ENCODE measurements at regions of chr3 and their contacts with region 1.

Region 1: GRCh38 chr3:195403852-195404408 is 38.9 kb downstream of the ACAP2 start:
- DNase-seq: no peak
- H3K4me3 Mint-ChIP-seq: no peak overlapping the region
- H3K27ac Mint-ChIP-seq: no peak overlapping the region
- H3K4me1 Mint-ChIP-seq: peaks cover 38% of the 10 kb centered on the region
- H3K27me3 Mint-ChIP-seq: no peaks in the 10 kb centered on the region

Region 2: DNA sequence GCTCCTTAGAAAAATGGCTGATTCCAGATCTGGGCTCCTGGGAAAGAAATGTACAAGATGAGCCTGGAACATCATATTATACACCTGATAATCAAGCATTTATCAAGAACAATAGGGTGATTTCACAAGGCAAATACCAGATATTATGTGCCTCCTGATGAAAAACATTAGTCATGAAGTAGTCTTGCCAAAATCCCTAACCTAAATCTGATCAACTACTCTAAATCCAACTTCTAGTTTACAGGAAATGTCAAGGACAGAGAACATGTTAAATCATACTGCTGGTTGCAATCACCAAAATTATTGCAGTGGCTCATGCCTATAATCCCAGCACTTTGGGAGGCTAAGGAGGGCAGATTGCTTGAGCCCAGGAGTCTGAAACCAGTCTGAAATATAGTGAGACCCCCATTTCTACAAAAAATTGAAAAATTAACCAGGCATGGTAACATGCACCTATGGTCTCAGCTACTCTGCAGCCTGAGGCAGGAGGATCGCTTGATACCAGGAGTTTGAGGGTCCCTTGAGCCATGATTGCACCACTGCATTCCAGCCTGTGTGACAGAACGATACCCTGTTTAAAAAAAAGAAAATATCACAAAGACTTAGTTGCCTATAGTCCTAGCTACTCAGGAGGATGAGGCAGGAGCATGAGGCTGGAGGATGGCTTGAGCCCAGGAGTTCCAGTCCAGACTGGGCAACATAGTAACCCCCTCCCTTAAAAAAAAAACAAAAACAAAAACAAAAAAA is 882.2 kb before region 1 on chr3:
- CTCF ChIA-PET with region 1: no interaction called
- POLR2A ChIA-PET with region 1: no interaction called
- intact Hi-C with region 1: no loop called
- DNase-seq: no peak
- H3K4me3 Mint-ChIP-seq: no peak overlapping the region
- H3K27ac Mint-ChIP-seq: no peak overlapping the region
- H3K4me1 Mint-ChIP-seq: peaks cover 41% of the 10 kb centered on the region
- H3K27me3 Mint-ChIP-seq: peaks cover 35% of the 10 kb centered on the region

Region 3: GRCh38 chr3:195337747-195338146 is 66.2 kb before region 1 on chr3:
- CTCF ChIA-PET with region 1: no interaction called
- POLR2A ChIA-PET with region 1: no interaction called
- intact Hi-C with region 1: loop called (anchors 10 kb)
- DNase-seq: no peak
- H3K4me3 Mint-ChIP-seq: no peak overlapping the region
- H3K27ac Mint-ChIP-seq: no peak overlapping the region
- H3K4me1 Mint-ChIP-seq: peaks cover 3% of the 10 kb centered on the region
- H3K27me3 Mint-ChIP-seq: no peaks in the 10 kb centered on the region

Region 4: GRCh38 chr3:195442573-195443390 is 38.9 kb after region 1 on chr3 and contains the start of gene ACAP2:
- CTCF ChIA-PET with region 1: interaction called, 4 read pairs
- POLR2A ChIA-PET with region 1: interaction called, 7 read pairs
- intact Hi-C with region 1: loop called (anchors 2 kb)
- DNase-seq: peak; percentile 99
- H3K4me3 Mint-ChIP-seq: peak within 1 kb of the TSS; percentile 92
- H3K27ac Mint-ChIP-seq: peak within 1 kb of the TSS; percentile 91
- H3K4me1 Mint-ChIP-seq: peaks cover 39% of the 10 kb centered on the region
- H3K27me3 Mint-ChIP-seq: no peaks in the 10 kb centered on the region
- total RNA-seq, gene ACAP2: 45.0 to 47.0 TPM

Region 5: DNA sequence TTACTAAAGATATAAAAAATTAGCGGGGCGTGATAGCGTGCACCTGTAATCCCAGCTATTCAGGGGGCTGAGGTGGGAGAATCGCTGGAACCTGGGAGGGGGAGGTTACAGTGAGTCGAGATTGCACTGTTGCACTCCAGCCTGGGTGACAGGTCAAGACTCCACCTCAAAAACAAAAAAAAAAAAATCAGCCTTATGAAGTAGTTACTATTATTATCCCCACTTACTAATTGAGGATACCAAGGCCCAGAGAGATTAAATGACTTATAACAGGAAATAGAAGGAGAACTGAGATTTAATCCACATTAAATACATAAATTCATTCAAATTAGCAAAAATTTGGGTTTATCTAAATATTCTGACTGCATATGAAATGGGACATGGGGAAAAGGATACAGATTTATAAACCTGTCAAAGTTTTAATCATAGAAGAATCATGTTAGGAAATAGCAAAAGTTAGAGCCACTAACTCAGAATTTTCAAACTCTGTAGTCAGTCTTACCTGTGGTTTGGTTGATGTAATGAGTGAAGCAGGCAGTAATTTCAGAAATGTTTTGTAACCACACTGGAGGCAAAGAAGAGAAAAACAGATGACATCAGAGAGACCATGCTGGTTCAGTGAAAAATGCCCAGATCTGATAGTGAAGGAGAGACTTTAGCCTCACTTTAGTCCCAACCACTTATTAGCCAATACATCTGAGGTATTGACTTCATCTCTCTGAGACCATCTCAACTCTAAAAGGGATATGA is 63.9 kb after region 1 on chr3:
- CTCF ChIA-PET with region 1: no interaction called
- POLR2A ChIA-PET with region 1: no interaction called
- intact Hi-C with region 1: loop called (anchors 5 kb)
- DNase-seq: no peak
- H3K4me3 Mint-ChIP-seq: no peak overlapping the region
- H3K27ac Mint-ChIP-seq: peak overlapping the region; percentile 66
- H3K4me1 Mint-ChIP-seq: peaks cover 14% of the 10 kb centered on the region
- H3K27me3 Mint-ChIP-seq: no peaks in the 10 kb centered on the region

Region 6: GRCh38 chr3:195587824-195588223 is 183.9 kb after region 1 on chr3:
- CTCF ChIA-PET with region 1: no interaction called
- POLR2A ChIA-PET with region 1: no interaction called
- intact Hi-C with region 1: no loop called
- DNase-seq: peak; percentile 33
- H3K4me3 Mint-ChIP-seq: no peak overlapping the region
- H3K27ac Mint-ChIP-seq: no peak overlapping the region
- H3K4me1 Mint-ChIP-seq: peaks cover 5% of the 10 kb centered on the region
- H3K27me3 Mint-ChIP-seq: peaks cover 2% of the 10 kb centered on the region